MCF 10A (cell line): ENCODE measurements at regions of chr7 and their contacts with region 1.

Region 1: GRCh38 chr7:77657427-77658224 is 38.6 kb upstream of the RSBN1L start:
- DNase-seq: peak; percentile 65
- H3K4me3 Mint-ChIP-seq: no peak overlapping the region
- H3K27ac Mint-ChIP-seq: no peak overlapping the region
- H3K4me1 Mint-ChIP-seq: peaks cover 2% of the 10 kb centered on the region
- H3K27me3 Mint-ChIP-seq: no peaks in the 10 kb centered on the region
- CTCF ChIP-seq: peak; percentile 56

Region 2: DNA sequence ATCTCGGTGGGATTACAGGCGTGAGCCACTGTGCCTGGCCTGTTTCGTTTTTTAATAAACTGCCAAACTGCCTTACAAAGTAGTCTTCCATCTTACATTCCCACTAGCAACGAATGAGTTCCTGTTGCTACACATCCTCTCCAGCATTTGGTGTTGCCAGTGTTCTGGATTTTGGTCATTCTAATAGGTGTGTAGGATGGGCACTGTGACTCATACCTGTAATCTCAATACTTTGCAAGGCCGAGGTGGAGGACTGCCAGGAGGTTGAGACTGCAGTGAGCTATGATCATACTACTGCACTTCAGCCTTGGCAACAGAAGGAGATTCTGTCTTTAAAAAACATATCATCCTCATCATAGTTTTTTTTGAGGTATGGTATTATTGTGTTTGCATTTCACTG is 17.3 kb after region 1 on chr7:
- CTCF ChIA-PET with region 1: interaction called, 14 read pairs
- POLR2A ChIA-PET with region 1: interaction called, 3 read pairs
- intact Hi-C with region 1: no loop called
- DNase-seq: peak; percentile 93
- H3K4me3 Mint-ChIP-seq: no peak overlapping the region
- H3K27ac Mint-ChIP-seq: no peak overlapping the region
- H3K4me1 Mint-ChIP-seq: peaks cover 9% of the 10 kb centered on the region
- H3K27me3 Mint-ChIP-seq: no peaks in the 10 kb centered on the region
- CTCF ChIP-seq: no peak

Region 3: DNA sequence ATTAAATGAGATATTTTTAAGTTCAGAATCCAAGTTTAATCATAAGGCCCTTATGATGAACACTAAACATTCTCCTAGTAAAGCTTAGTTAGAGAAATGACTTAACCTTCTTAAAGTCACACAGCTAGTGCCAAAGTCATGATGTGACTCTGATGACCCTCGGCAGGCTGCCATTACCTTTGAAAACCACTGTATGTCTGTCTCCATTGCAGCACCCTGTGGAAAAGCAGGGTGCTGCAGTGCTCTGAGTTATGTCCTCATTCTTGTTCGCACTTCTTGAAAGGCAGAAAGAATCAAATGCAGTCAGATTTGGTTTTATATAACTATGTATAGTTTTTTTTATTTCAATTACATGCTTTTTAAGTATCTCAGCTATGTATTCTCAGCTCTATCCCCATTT is 246.0 kb after region 1 on chr7:
- CTCF ChIA-PET with region 1: interaction called, 3 read pairs
- POLR2A ChIA-PET with region 1: no interaction called
- intact Hi-C with region 1: loop called (anchors 1 kb)
- DNase-seq: peak; percentile 43
- H3K4me3 Mint-ChIP-seq: no peak overlapping the region
- H3K27ac Mint-ChIP-seq: no peak overlapping the region
- H3K4me1 Mint-ChIP-seq: peaks cover 4% of the 10 kb centered on the region
- H3K27me3 Mint-ChIP-seq: no peaks in the 10 kb centered on the region
- CTCF ChIP-seq: no peak